CD4-positive, alpha-beta T cell (primary cell): ENCODE measurements at regions of chr4 and their contacts with region 1.

Region 1: GRCh38 chr4:139030614-139031235 is 15.1 kb downstream of the NOCT start:
- DNase-seq: peak; percentile 60 to 91 (median 68)
- ATAC-seq: peak; percentile 86
- H3K4me3 ChIP-seq: no peak overlapping the region
- H3K4me3 Mint-ChIP-seq: no peak overlapping the region
- H3K27ac ChIP-seq: no peak overlapping the region
- H3K27ac Mint-ChIP-seq: no peak overlapping the region
- H3K4me1 ChIP-seq: peaks cover 5% of the 10 kb centered on the region
- H3K4me1 Mint-ChIP-seq: peaks cover 16% of the 10 kb centered on the region
- H3K27me3 ChIP-seq: no peaks in the 10 kb centered on the region
- H3K27me3 Mint-ChIP-seq: no peaks in the 10 kb centered on the region
- CTCF ChIP-seq: peak; percentile 88

Region 2: GRCh38 chr4:139015269-139015947 is 15.3 kb before region 1 on chr4 and contains the start of gene NOCT:
- CTCF ChIA-PET with region 1: interaction called, 22 read pairs
- POLR2A ChIA-PET with region 1: interaction called, 5 read pairs
- intact Hi-C with region 1: no loop called
- DNase-seq: peak; percentile 75 to 98 (median 86)
- ATAC-seq: peak; percentile 90
- H3K4me3 ChIP-seq: peak within 1 kb of the TSS; percentile 74
- H3K4me3 Mint-ChIP-seq: peak within 1 kb of the TSS; percentile 93
- H3K27ac ChIP-seq: peak within 1 kb of the TSS; percentile 78 to 87
- H3K27ac Mint-ChIP-seq: peak within 1 kb of the TSS; percentile 95
- H3K4me1 ChIP-seq: peaks cover 20% of the 10 kb centered on the region
- H3K4me1 Mint-ChIP-seq: peaks cover 26% of the 10 kb centered on the region
- H3K27me3 ChIP-seq: no peaks in the 10 kb centered on the region
- H3K27me3 Mint-ChIP-seq: no peaks in the 10 kb centered on the region
- CTCF ChIP-seq: no peak
- total RNA-seq, gene NOCT: 13.7 to 15.8 TPM

Region 3: DNA sequence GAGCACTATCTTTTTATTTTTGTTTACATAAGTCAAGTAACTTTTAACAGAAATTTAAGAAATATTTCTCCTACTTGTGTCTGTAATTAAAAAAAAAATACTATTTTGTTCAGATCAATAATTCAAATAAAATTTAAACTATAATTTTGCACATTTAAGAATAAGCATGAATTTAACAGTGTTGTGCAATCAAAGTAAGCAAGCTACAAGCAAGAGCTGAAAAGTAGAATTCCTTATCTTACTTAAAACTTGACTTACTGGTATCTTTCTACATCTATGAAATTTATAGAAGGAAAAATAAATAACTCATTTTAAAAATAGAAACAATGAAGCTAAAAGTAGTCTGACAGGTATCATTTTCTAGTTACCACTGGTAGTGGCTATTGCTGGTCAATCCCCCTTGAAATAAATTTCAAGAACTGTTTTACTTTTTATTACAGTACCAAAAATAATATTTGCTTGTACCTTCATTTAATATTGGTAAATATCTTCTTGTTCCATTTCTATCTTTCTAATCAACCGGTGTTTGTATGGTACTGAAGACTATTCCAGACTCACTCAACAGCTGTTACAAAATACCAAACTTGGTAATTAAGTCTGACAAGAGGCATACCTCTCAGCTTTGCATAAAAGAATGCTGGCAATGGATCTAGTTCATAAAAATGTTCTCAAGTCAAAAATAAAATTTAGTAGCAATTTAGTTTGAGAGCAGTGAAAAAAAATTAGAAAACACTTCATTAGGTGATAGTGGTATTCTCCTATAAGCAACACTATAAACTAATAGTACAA is 47.0 kb after region 1 on chr4:
- CTCF ChIA-PET with region 1: interaction called, 16 read pairs
- POLR2A ChIA-PET with region 1: interaction called, 10 read pairs
- intact Hi-C with region 1: no loop called
- DNase-seq: no peak
- ATAC-seq: no peak
- H3K4me3 ChIP-seq: no peak overlapping the region
- H3K4me3 Mint-ChIP-seq: peak overlapping the region; percentile 38
- H3K27ac ChIP-seq: no peak overlapping the region
- H3K27ac Mint-ChIP-seq: peak overlapping the region; percentile 65
- H3K4me1 ChIP-seq: peaks cover 19% of the 10 kb centered on the region
- H3K4me1 Mint-ChIP-seq: peaks cover 76% of the 10 kb centered on the region
- H3K27me3 ChIP-seq: no peaks in the 10 kb centered on the region
- H3K27me3 Mint-ChIP-seq: no peaks in the 10 kb centered on the region
- CTCF ChIP-seq: no peak

Region 4: GRCh38 chr4:139099366-139099982 is 68.7 kb after region 1 on chr4:
- CTCF ChIA-PET with region 1: interaction called, 8 read pairs
- POLR2A ChIA-PET with region 1: interaction called, 3 read pairs
- intact Hi-C with region 1: loop called (anchors 1 to 2 kb)
- DNase-seq: peak; percentile 50 to 90 (median 66)
- ATAC-seq: peak; percentile 88
- H3K4me3 ChIP-seq: no peak overlapping the region
- H3K4me3 Mint-ChIP-seq: no peak overlapping the region
- H3K27ac ChIP-seq: no peak overlapping the region
- H3K27ac Mint-ChIP-seq: no peak overlapping the region
- H3K4me1 ChIP-seq: no peaks in the 10 kb centered on the region
- H3K4me1 Mint-ChIP-seq: peaks cover 5% of the 10 kb centered on the region
- H3K27me3 ChIP-seq: no peaks in the 10 kb centered on the region
- H3K27me3 Mint-ChIP-seq: no peaks in the 10 kb centered on the region
- CTCF ChIP-seq: peak; percentile 89

Region 5: DNA sequence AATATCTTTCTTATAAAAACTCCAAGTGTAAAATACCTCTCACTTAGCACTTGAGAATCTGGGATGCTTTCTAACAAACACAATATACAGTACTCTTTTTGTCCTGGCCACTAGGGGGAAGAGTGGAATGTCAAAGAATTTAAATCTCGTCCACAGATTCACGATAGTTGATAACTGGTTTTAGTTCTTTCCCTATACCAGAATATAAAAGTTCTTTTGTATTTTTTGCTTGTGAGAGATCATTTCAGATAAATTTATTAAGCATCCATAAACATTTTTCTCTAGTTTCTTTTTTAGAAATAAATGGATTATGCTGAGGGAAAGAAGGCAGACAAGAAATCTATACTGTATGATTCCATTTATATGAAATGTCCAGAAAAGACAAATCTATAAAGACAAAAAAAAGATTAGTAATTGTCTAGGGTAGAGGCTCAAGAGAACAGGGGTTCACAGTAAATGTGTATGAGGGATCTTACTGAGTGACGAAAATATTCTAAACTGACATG is 198.9 kb after region 1 on chr4:
- CTCF ChIA-PET with region 1: no interaction called
- POLR2A ChIA-PET with region 1: no interaction called
- intact Hi-C with region 1: loop called (anchors 5 kb)
- DNase-seq: peak in 4 of 14 experiments; percentile 17 to 71 (median 67)
- ATAC-seq: peak; percentile 71
- H3K4me3 ChIP-seq: no peak overlapping the region
- H3K4me3 Mint-ChIP-seq: no peak overlapping the region
- H3K27ac ChIP-seq: no peak overlapping the region
- H3K27ac Mint-ChIP-seq: no peak overlapping the region
- H3K4me1 ChIP-seq: no peaks in the 10 kb centered on the region
- H3K4me1 Mint-ChIP-seq: no peaks in the 10 kb centered on the region
- H3K27me3 ChIP-seq: no peaks in the 10 kb centered on the region
- H3K27me3 Mint-ChIP-seq: no peaks in the 10 kb centered on the region
- CTCF ChIP-seq: peak; percentile 82

Region 6: GRCh38 chr4:139301113-139301820 is 270.5 kb after region 1 on chr4 and contains the start of gene NAA15:
- CTCF ChIA-PET with region 1: interaction called, 13 read pairs
- POLR2A ChIA-PET with region 1: interaction called, 17 read pairs
- intact Hi-C with region 1: loop called in 1 of 2 experiments (anchors 5 kb)
- DNase-seq: peak; percentile 95 to 99 (median 96)
- ATAC-seq: peak; percentile 86
- H3K4me3 ChIP-seq: peak within 1 kb of the TSS; percentile 91
- H3K4me3 Mint-ChIP-seq: peak within 1 kb of the TSS; percentile 95
- H3K27ac ChIP-seq: peak within 1 kb of the TSS; percentile 97 to 98
- H3K27ac Mint-ChIP-seq: peak within 1 kb of the TSS; percentile 94
- H3K4me1 ChIP-seq: peaks cover 26% of the 10 kb centered on the region
- H3K4me1 Mint-ChIP-seq: peaks cover 67% of the 10 kb centered on the region
- H3K27me3 ChIP-seq: no peaks in the 10 kb centered on the region
- H3K27me3 Mint-ChIP-seq: no peaks in the 10 kb centered on the region
- CTCF ChIP-seq: no peak
- total RNA-seq, gene NAA15: 54.2 to 57.1 TPM

Region 7: DNA sequence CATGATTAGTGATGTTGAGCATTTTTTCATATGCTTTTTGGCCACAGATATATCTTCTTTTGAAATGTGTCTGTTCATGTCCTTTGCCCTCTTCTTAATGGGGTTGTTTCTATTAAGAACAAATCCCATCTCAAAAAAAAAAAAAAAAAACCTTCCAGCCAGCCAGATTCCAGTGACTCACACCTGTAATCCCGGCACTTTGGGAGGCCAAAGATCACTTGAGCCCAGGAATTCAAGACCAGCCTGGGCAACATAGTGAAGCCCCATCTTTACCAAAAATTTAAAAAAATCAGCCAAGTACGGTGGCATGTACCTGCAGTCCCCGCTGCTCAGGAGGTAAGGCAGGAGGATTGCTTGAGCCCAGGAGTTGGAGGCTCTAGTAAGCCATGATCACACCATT is 428.3 kb after region 1 on chr4:
- CTCF ChIA-PET with region 1: no interaction called
- POLR2A ChIA-PET with region 1: no interaction called
- intact Hi-C with region 1: no loop called
- DNase-seq: no peak
- ATAC-seq: no peak
- H3K4me3 ChIP-seq: no peak overlapping the region
- H3K4me3 Mint-ChIP-seq: no peak overlapping the region
- H3K27ac ChIP-seq: no peak overlapping the region
- H3K27ac Mint-ChIP-seq: no peak overlapping the region
- H3K4me1 ChIP-seq: peaks cover 23% of the 10 kb centered on the region
- H3K4me1 Mint-ChIP-seq: peaks cover 74% of the 10 kb centered on the region
- H3K27me3 ChIP-seq: no peaks in the 10 kb centered on the region
- H3K27me3 Mint-ChIP-seq: no peaks in the 10 kb centered on the region
- CTCF ChIP-seq: no peak

Region 8: GRCh38 chr4:139651282-139652194 is 620.8 kb after region 1 on chr4:
- CTCF ChIA-PET with region 1: no interaction called
- POLR2A ChIA-PET with region 1: interaction called, 5 read pairs
- intact Hi-C with region 1: loop called (anchors 1 to 2 kb)
- DNase-seq: peak; percentile 52 to 87 (median 59)
- ATAC-seq: peak; percentile 92
- H3K4me3 ChIP-seq: no peak overlapping the region
- H3K4me3 Mint-ChIP-seq: no peak overlapping the region
- H3K27ac ChIP-seq: no peak overlapping the region
- H3K27ac Mint-ChIP-seq: no peak overlapping the region
- H3K4me1 ChIP-seq: peaks cover 5% of the 10 kb centered on the region
- H3K4me1 Mint-ChIP-seq: peaks cover 6% of the 10 kb centered on the region
- H3K27me3 ChIP-seq: peaks cover 0 to 5% of the 10 kb centered on the region in 2 experiments
- H3K27me3 Mint-ChIP-seq: peaks cover 4% of the 10 kb centered on the region
- CTCF ChIP-seq: peak; percentile 95